AG04450 (cell line): ENCODE measurements at regions of chr7 and their contacts with region 1.

Region 1: GRCh38 chr7:35694781-35695472 is at the start of gene HERPUD2:
- DNase-seq: peak; percentile 54
- H3K4me3 ChIP-seq: peak within 1 kb of the TSS; percentile 75
- H3K27ac ChIP-seq: peak within 1 kb of the TSS; percentile 82
- H3K27me3 ChIP-seq: no peaks in the 10 kb centered on the region
- CTCF ChIP-seq: 0 out of 2 replicates have a peak, but pooled peaks have one; percentile 2
- polyA plus RNA-seq, gene HERPUD2: 42.7 and 43.3 TPM in 2 replicates

Region 2: DNA sequence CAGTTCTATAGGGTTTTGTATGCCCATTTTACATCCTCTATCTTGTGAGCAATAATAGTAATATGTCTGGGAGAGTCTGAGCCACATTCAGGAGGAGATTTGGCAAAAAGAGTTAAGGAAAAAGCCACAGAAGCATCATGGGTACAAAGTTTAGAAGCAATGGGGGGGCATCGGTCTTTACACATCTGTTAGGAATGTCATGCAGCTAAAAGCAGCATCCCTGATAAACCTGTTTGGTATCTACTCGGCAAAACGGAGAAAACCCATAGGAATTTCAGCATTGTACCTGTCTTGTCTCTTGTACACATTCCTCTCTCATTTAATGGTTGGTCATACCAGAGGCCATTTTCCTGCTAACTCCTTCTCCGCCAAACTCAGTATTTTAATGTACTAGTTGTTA is 12.5 kb after region 1 on chr7:
- CTCF ChIA-PET with region 1: interaction called, 53 read pairs
- POLR2A ChIA-PET with region 1: no interaction called
- DNase-seq: no peak
- H3K4me3 ChIP-seq: no peak overlapping the region
- H3K27ac ChIP-seq: no peak overlapping the region
- H3K27me3 ChIP-seq: no peaks in the 10 kb centered on the region
- CTCF ChIP-seq: no peak

Region 3: DNA sequence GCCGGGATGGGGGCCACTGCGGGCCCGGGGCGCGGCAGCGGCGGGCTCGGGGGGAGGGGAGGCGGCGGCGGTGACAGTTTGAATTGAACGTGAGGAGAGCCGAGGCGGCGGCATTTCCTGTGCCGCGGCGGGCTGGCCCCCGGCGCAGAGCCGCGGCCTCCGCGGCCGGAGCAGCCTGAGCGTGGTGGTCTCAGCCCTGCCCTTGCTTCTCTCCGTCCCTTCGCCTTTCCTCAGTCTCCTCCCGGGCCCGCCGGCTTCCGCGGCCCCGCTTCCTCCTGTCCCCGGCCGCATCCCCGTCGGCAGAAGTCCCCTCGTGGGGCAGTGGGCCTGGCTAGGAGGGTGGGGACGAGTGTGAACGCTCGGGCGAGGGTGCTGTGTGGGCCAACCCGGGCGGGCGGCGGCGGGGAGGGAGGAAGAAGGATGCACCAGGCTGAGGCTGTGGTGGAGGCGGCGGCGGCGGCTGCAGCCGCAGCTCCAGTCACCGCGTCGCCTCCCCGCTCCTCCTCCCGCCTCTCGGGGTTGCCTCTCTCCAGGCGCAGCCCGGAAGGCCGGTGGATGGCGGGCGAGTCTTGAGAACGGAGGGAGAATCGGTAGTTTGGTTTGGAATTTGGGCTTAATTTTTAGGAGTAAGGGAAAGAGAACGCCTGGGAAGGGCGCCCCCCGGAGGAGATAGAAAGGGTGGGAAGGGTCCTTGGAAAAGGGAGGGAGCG is 106.6 kb after region 1 on chr7:
- CTCF ChIA-PET with region 1: interaction called, 5 read pairs
- POLR2A ChIA-PET with region 1: interaction called, 17 read pairs
- DNase-seq: no peak
- H3K4me3 ChIP-seq: peak overlapping the region; percentile 78
- H3K27ac ChIP-seq: peak overlapping the region; percentile 82
- H3K27me3 ChIP-seq: no peaks in the 10 kb centered on the region
- CTCF ChIP-seq: peak; percentile 74